GM10248 (cell line): ENCODE measurements at regions of chr3 and their contacts with region 1.

Region 1: DNA sequence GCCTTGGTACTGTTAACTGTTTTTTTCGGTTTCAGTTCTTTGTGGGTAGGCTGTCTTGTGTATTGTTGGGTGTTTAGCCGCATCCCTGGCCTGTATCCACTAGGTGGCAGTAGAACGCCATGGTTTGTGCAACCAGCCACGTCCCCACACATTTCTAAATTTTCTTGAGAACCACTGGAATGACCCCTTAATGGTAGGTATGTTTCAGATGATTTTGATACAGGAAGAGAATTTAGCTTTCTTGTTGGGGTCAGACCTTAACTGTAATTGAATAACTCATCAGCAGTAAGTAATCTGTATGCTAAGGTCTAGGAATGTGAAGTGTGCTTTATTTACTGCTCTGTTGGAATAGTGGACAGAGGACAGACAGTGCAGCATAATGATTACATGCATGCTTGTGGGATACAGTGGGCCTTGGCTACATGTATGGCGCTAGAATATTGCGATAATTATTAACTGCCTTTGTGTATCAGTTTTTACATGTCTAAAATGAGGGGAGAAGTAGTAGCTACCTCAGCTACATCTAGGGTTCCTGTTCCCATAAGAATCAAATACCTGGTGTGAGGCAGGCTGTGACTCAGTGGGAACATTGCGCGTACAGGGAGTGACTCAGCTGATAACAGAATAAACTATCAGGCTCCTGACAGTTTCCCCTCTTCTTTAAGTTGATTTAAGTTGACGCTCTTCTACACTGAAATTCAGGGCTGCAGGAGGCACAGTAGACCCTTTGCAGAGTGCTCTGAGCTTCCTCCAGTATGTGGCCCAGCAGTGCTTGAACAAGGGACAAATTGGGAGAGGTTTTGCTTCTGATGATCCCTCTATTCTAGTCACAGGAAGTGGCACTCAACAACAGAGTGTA is 25.0 kb upstream of the GPR171 start:
- DNase-seq: peak; percentile 73
- CTCF ChIP-seq: peak; percentile 91

Region 2: DNA sequence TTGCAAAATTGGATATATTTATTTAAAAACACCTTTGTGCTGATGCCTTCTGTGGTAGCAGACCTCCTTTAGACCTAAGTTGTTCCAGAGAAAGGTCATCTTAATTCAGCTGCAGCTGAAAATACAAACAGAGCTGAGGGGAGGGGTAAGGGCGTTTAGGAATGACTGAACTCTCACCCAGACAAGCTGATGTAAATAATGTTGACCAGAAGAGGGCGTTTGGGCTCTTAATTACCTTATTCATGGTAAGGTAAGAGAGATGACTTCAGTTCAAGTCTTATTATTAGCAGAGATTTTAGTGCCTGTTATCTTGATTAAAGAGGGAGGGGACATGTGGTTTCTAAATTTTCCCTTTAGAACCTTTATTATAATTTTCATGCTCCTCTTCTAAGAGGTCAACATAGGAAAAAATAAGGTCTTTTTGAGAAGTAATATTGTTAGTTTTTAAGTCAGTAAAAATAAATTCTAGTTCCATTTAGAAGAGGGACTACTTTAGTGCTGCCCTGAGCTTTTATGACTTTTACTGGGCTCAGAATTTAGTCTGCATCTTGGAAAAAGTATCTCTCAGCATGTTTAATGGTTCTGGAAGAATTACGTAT is 71.3 kb before region 1 on chr3:
- CTCF ChIA-PET with region 1: interaction called, 10 read pairs
- POLR2A ChIA-PET with region 1: no interaction called
- DNase-seq: peak; percentile 60
- CTCF ChIP-seq: peak; percentile 66

Region 3: DNA sequence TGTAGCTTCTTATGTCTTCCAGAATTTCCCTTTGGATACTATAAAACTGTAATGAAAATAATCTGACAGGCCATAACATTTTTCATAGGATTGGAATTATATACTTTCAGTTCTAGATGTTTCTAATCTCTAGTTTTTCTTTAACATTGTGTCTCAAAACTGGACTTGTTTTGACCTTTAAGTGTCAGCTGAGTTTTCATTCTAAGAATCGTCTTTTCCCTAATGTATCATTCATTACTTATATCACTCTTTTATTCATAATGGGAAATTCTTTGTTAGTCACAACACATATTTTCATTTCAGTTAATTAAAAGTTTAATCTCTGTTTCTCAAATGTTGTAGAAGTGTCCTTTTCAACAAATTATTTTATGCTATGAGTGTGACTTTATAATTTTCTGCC is 36.9 kb before region 1 on chr3:
- CTCF ChIA-PET with region 1: interaction called, 11 read pairs
- POLR2A ChIA-PET with region 1: no interaction called
- DNase-seq: no peak
- CTCF ChIP-seq: no peak

Region 4: GRCh38 chr3:151210676-151211381 is 17.2 kb before region 1 on chr3:
- CTCF ChIA-PET with region 1: interaction called, 29 read pairs
- POLR2A ChIA-PET with region 1: no interaction called
- DNase-seq: no peak
- CTCF ChIP-seq: peak; percentile 15

Region 5: DNA sequence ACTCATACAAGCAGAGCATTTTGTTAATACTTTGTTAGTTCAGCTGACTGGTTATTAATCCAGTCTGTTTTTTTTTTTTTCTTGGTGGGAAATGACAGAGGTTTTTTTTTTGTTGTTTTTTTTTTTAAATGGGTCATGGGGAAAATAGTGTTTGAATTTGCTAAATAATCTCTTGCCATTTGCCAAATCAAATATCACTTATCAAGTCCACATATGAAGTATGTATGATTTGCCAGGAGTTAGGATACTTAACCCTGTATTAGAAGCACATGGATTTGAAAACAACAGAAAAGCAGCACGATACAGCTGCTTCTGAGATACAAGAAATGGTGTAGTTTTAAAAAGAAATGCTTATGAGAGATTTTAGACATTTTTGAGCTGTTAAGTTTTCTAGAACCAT is 28.7 kb after region 1 on chr3:
- CTCF ChIA-PET with region 1: interaction called, 23 read pairs
- POLR2A ChIA-PET with region 1: no interaction called
- DNase-seq: no peak
- CTCF ChIP-seq: no peak

Region 6: DNA sequence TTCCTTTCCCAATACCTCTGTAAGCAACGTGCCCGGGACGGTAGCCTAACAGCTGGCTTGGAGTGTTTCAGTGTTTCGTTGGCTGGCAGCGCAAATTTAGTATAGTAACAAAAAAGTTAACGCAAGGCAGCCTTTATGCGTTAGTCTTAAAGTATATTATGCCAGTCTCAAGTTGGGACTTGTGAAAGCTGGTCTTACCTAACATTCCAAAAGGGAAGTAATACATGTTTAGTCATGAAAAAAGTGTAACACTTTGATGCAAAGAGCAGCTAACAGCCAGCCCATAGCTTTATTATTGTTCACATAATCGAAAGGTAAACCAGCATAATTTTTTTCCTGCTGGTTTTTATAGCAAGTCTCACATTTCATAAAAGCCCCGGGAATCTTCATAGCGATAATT is 90.9 kb after region 1 on chr3:
- CTCF ChIA-PET with region 1: no interaction called
- POLR2A ChIA-PET with region 1: no interaction called
- DNase-seq: no peak
- CTCF ChIP-seq: no peak